CD8-positive, alpha-beta memory T cell (primary cell): ENCODE measurements at regions of chr11 and their contacts with region 1.

Region 1: GRCh38 chr11:62591448-62592145 is at the start of gene TUT1:
- DNase-seq: peak; percentile 91 to 98 (median 97)
- H3K4me3 ChIP-seq: peak within 1 kb of the TSS; percentile 83
- H3K4me3 Mint-ChIP-seq: peak within 1 kb of the TSS; percentile 84 to 98 (median 95)
- H3K27ac ChIP-seq: peak within 1 kb of the TSS; percentile 92
- H3K27ac Mint-ChIP-seq: peak within 1 kb of the TSS; percentile 84 to 99 (median 98)
- H3K4me1 ChIP-seq: peaks cover 41% of the 10 kb centered on the region
- H3K4me1 Mint-ChIP-seq: peaks cover 36 to 71% (median 59%) of the 10 kb centered on the region in 3 donors
- H3K27me3 ChIP-seq: no peaks in the 10 kb centered on the region
- H3K27me3 Mint-ChIP-seq: peaks cover 0 to 3% of the 10 kb centered on the region in 2 donors
- total RNA-seq, gene TUT1: 30.8 to 32.7 TPM

Region 2: DNA sequence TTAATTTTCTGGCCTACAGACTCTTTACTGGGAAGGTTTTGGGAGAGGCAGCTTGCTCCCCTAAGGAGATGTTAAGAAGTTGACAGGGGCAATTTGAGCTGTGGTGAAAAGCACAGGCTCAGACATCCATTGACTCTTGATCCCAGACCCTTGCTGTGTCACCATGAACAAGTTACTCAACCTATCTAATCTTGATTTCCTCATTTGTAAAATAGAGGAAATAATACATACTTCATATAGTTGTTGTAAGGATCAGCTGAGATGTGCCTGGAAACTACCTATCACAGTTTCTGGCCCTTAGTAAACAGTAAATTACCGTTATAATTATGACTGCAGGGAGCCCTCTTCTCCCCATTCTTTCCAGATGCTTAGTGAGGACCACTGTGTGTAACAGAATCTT is 276.2 kb before region 1 on chr11:
- CTCF ChIA-PET with region 1: no interaction called
- POLR2A ChIA-PET with region 1: no interaction called
- DNase-seq: no peak
- H3K4me3 ChIP-seq: no peak overlapping the region
- H3K4me3 Mint-ChIP-seq: no peak overlapping the region
- H3K27ac ChIP-seq: no peak overlapping the region
- H3K27ac Mint-ChIP-seq: no peak overlapping the region
- H3K4me1 ChIP-seq: peaks cover 12% of the 10 kb centered on the region
- H3K4me1 Mint-ChIP-seq: peaks cover 12 to 17% (median 15%) of the 10 kb centered on the region in 3 donors
- H3K27me3 ChIP-seq: peaks cover 6% of the 10 kb centered on the region
- H3K27me3 Mint-ChIP-seq: peaks cover 25 to 46% of the 10 kb centered on the region in 2 donors

Region 3: GRCh38 chr11:62514151-62514550 is 77.4 kb before region 1 on chr11:
- CTCF ChIA-PET with region 1: no interaction called
- POLR2A ChIA-PET with region 1: no interaction called
- DNase-seq: no peak
- H3K4me3 ChIP-seq: no peak overlapping the region
- H3K4me3 Mint-ChIP-seq: no peak overlapping the region
- H3K27ac ChIP-seq: no peak overlapping the region
- H3K27ac Mint-ChIP-seq: peak overlapping the region in 3 of 8 donors; percentile 17 to 60 (median 26)
- H3K4me1 ChIP-seq: no peaks in the 10 kb centered on the region
- H3K4me1 Mint-ChIP-seq: peaks cover 27 to 56% (median 34%) of the 10 kb centered on the region in 3 donors
- H3K27me3 ChIP-seq: no peaks in the 10 kb centered on the region
- H3K27me3 Mint-ChIP-seq: no peaks in the 10 kb centered on the region

Region 4: GRCh38 chr11:62556108-62556871 is 35.3 kb before region 1 on chr11:
- CTCF ChIA-PET with region 1: interaction called, 11 read pairs
- POLR2A ChIA-PET with region 1: interaction called, 18 read pairs
- DNase-seq: peak; percentile 74 to 95 (median 83)
- H3K4me3 ChIP-seq: peak overlapping the region; percentile 70
- H3K4me3 Mint-ChIP-seq: peak overlapping the region; percentile 80 to 95 (median 85)
- H3K27ac ChIP-seq: peak overlapping the region; percentile 95
- H3K27ac Mint-ChIP-seq: peak overlapping the region; percentile 97 to 100 (median 99)
- H3K4me1 ChIP-seq: peaks cover 96% of the 10 kb centered on the region
- H3K4me1 Mint-ChIP-seq: peaks cover 91 to 97% (median 96%) of the 10 kb centered on the region in 3 donors
- H3K27me3 ChIP-seq: no peaks in the 10 kb centered on the region
- H3K27me3 Mint-ChIP-seq: peaks cover 0 to 5% of the 10 kb centered on the region in 2 donors

Region 5: DNA sequence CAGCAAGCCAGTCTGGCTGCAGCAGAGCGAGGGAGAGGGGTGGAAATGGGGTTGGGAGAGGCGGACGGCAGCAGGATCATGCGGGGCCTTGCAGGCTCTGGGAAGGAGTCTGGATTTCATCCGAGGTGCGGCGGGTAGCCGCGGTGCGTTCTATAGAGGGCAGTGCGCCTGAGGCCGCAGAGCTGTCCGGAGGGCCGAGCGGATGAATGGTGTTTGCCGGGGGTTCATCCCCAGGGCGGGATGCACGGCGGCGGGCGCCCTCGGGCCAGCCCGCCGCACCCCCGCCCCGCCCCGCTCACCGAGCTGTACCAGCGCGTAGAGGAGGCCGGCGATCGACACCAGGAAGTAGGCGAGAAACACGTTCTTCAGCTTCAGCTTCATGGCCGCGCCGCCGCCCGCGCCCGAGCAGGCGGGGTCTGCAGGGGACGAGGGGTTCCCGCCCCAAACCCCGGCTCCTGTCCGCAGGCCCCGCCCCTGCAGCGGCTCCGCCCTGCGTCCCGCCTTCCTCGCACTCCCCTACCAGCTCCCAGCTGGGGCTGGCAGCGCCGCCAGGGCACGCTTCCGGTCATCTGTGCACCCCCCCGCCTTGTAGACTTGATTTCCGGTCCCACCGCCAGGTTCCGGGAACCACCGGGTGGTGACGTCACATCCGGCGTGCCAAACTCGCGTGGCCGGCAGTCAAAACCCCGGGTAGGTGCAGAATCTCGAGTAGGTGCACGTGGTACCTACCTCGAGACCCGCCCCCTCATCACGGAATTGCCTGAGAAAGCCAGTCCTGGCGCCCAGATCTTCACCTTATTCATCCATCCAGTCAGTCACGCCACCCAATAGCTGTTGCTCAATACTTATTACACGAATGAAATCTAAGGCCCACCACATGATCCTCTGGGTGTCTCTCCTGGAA is 30.2 kb after region 1 on chr11 and contains the start of gene B3GAT3:
- CTCF ChIA-PET with region 1: interaction called, 24 read pairs
- POLR2A ChIA-PET with region 1: interaction called, 34 read pairs
- DNase-seq: peak; percentile 95 to 98 (median 97)
- H3K4me3 ChIP-seq: peak within 1 kb of the TSS; percentile 94
- H3K4me3 Mint-ChIP-seq: peak within 1 kb of the TSS; percentile 90 to 96 (median 94)
- H3K27ac ChIP-seq: peak within 1 kb of the TSS; percentile 80
- H3K27ac Mint-ChIP-seq: peak within 1 kb of the TSS; percentile 89 to 100 (median 97)
- H3K4me1 ChIP-seq: peaks cover 16% of the 10 kb centered on the region
- H3K4me1 Mint-ChIP-seq: peaks cover 15 to 28% (median 26%) of the 10 kb centered on the region in 3 donors
- H3K27me3 ChIP-seq: no peaks in the 10 kb centered on the region
- H3K27me3 Mint-ChIP-seq: peaks cover 0 to 1% of the 10 kb centered on the region in 2 donors
- total RNA-seq, gene B3GAT3: 67.4 to 68.2 TPM

Region 6: GRCh38 chr11:62665075-62665598 is 73.5 kb after region 1 on chr11 and contains the starts of genes C11orf98 and CSKMT:
- CTCF ChIA-PET with region 1: interaction called, 44 read pairs
- POLR2A ChIA-PET with region 1: interaction called, 71 read pairs
- DNase-seq: peak; percentile 89 to 97 (median 94)
- H3K4me3 ChIP-seq: peak within 1 kb of the TSS; percentile 98
- H3K4me3 Mint-ChIP-seq: peak within 1 kb of the TSS; percentile 96 to 100 (median 97)
- H3K27ac ChIP-seq: peak within 1 kb of the TSS; percentile 89
- H3K27ac Mint-ChIP-seq: peak within 1 kb of the TSS; percentile 94 to 99 (median 96)
- H3K4me1 ChIP-seq: peaks cover 24% of the 10 kb centered on the region
- H3K4me1 Mint-ChIP-seq: peaks cover 33 to 53% (median 33%) of the 10 kb centered on the region in 3 donors
- H3K27me3 ChIP-seq: no peaks in the 10 kb centered on the region
- H3K27me3 Mint-ChIP-seq: peaks cover 0 to 4% of the 10 kb centered on the region in 2 donors
- total RNA-seq, gene C11orf98: 178 to 182 TPM
- total RNA-seq, gene CSKMT: 43.1 to 48.3 TPM

Region 7: GRCh38 chr11:62705880-62706849 is 114.6 kb after region 1 on chr11:
- CTCF ChIA-PET with region 1: interaction called, 7 read pairs
- POLR2A ChIA-PET with region 1: interaction called, 17 read pairs
- DNase-seq: peak; percentile 92 to 98 (median 95)
- H3K4me3 ChIP-seq: peak overlapping the region; percentile 88
- H3K4me3 Mint-ChIP-seq: peak overlapping the region; percentile 86 to 95 (median 89)
- H3K27ac ChIP-seq: peak overlapping the region; percentile 95
- H3K27ac Mint-ChIP-seq: peak overlapping the region; percentile 92 to 99 (median 94)
- H3K4me1 ChIP-seq: peaks cover 48% of the 10 kb centered on the region
- H3K4me1 Mint-ChIP-seq: peaks cover 36 to 49% (median 41%) of the 10 kb centered on the region in 3 donors
- H3K27me3 ChIP-seq: no peaks in the 10 kb centered on the region
- H3K27me3 Mint-ChIP-seq: no peaks in the 10 kb centered on the region

Region 8: DNA sequence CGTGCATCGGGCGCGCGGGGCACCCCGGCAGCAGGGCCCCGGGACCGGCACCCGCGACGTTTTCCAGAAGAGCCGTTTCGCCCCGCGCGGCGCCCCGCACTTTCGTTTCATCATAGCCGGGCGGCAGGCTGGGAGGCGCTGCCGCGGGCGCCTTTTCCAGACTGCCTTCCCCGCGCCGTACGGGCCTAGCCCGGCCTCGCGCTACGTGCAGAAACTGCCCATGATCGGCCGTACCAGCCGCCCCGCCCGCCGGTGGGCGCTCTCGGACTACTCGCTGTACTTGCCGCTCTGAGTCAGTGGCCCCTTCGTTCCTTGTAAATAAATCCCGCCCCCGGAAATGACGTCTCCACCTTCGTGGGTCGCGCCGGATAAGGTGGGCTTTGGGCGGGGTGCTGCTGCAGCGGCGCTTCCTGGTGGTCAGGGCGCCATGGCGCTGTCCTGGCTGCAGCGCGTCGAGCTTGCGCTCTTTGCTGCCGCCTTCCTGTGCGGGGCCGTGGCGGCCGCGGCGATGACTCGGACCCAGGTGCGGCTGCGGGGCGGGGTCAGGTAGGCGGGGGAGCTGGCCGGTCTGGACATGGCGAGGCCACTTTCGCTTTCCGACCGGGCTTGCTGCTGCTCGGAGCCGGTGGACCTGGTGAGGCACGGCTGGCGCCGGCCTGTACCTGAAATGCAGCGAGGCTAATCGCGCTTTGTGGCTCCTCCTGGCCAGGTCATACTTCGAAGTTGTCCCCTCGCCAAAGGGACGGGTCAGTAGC is 195.6 kb after region 1 on chr11 and contains the start of gene TMEM179B:
- CTCF ChIA-PET with region 1: interaction called, 17 read pairs
- POLR2A ChIA-PET with region 1: interaction called, 7 read pairs
- DNase-seq: peak; percentile 97 to 99 (median 97)
- H3K4me3 ChIP-seq: peak within 1 kb of the TSS; percentile 98
- H3K4me3 Mint-ChIP-seq: peak within 1 kb of the TSS; percentile 94 to 97 (median 95)
- H3K27ac ChIP-seq: peak within 1 kb of the TSS; percentile 96
- H3K27ac Mint-ChIP-seq: peak within 1 kb of the TSS; percentile 95 to 100 (median 96)
- H3K4me1 ChIP-seq: peaks cover 30% of the 10 kb centered on the region
- H3K4me1 Mint-ChIP-seq: peaks cover 41 to 55% (median 51%) of the 10 kb centered on the region in 3 donors
- H3K27me3 ChIP-seq: no peaks in the 10 kb centered on the region
- H3K27me3 Mint-ChIP-seq: no peaks in the 10 kb centered on the region
- total RNA-seq, gene TMEM179B: 46.4 to 49.2 TPM

Region 9: GRCh38 chr11:62855571-62856332 is 264.2 kb after region 1 on chr11:
- CTCF ChIA-PET with region 1: interaction called, 8 read pairs
- POLR2A ChIA-PET with region 1: interaction called, 10 read pairs
- DNase-seq: peak; percentile 94 to 99 (median 98)
- H3K4me3 ChIP-seq: peak overlapping the region; percentile 98
- H3K4me3 Mint-ChIP-seq: peak overlapping the region; percentile 94 to 99 (median 98)
- H3K27ac ChIP-seq: peak overlapping the region; percentile 94
- H3K27ac Mint-ChIP-seq: peak overlapping the region; percentile 84 to 96 (median 94)
- H3K4me1 ChIP-seq: peaks cover 47% of the 10 kb centered on the region
- H3K4me1 Mint-ChIP-seq: peaks cover 46 to 63% (median 55%) of the 10 kb centered on the region in 3 donors
- H3K27me3 ChIP-seq: no peaks in the 10 kb centered on the region
- H3K27me3 Mint-ChIP-seq: peaks cover 0 to 6% of the 10 kb centered on the region in 2 donors